ENCODE measurements at regions of chr7 and their contacts with region 1.

Region 1: DNA sequence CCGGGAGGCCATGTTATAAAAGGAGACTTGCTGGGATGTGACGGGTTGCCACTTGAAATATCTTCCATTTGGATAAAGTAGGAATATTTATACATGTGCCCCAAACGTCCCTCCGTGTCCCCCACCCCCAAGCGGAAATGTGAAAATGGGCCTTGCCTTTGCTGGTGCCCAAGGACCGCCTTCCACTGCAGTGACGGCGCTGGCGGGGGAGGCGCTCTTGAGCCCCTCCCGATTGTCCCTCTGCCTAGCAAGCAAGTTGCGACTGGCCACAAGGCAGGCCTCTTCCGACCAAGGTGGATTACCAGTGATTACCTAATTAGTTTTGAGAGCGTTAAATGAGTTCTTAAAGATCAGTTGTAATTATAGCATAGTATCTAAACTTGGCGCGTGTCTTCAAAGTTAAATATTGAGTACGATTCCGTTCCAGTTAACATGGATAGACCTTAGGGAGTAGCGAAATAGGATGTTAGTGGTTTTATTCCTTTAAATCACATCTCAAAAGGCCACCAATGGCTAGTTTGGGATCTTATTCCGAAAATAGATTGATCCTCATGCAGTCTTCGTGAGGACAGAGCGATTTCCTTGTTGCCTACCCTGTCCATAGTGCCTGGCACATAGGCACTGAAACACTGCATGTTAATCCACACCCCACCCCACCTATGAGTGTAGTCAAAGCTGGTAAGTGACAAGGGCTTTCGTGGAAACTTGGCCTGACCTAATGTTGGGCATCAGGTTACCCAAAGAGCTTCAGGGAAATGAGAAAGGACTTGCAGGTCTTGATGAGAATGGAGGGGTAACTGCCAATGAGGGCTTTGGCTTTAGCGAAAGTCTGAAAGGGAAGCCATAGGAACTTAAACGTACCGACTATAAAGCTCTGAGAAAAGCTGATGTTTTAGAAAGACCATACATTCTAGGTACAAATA is 1.1 kb downstream of the PPIA start:
- DNase-seq: no peak
- ATAC-seq: peak; percentile 77
- H3K4me3 ChIP-seq: peak overlapping the region; percentile 96
- H3K27ac ChIP-seq: peak overlapping the region; percentile 99
- H3K4me1 ChIP-seq: peaks cover 3% of the 10 kb centered on the region
- H3K27me3 ChIP-seq: no peaks in the 10 kb centered on the region
- CTCF ChIP-seq: peak; percentile 57 to 61 (median 61)
- EP300 ChIP-seq: no peak
- POLR2A ChIP-seq: no peak
- RAD21 ChIP-seq: peak; percentile 24; the same call in 1 of the 2 replicates

Region 2: DNA sequence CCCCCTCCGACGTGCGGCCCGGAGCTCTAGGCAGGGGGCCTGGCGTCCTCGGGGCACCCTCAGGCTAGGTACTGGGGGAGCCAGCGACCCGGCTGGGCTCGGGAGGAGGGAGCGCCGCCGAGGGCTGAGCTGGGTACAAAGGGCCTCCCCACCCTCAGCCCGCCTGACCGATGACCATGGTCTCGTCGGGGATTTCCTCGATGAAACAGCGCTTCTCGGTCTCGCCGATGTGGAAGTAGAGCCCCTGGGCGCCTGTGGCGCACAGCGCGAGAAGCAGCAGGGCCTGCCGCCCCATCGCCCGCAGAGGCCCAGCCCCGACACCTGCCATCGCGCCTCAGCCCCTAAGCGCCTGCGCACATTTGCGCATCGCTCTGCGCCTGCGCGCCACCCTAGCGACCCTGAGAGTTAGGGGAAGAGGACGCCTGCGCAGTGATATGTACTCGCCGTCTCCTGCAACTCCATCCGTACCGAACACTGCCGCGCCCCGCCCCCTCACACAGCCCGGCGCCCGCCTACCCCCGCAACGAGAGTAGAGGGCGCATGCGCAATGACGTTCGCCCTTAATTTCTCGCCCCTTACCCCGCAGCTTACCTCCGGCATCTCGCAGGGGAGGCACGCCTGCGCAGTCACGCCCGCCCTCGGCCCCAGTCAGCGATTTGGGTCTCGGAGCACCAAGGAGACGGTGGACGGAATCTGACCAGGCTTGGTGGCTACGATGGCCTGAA is 215.5 kb before region 1 on chr7 and contains the start of gene TMED4:
- CTCF ChIA-PET with region 1: interaction called, 3 read pairs
- POLR2A ChIA-PET with region 1: interaction called, 7 read pairs
- RAD21 ChIA-PET with region 1: interaction called, 4 read pairs
- SMC1A ChIA-PET with region 1: interaction called, 3 read pairs
- in situ Hi-C with region 1: no loop called
- intact Hi-C with region 1: loop called (anchors 5 kb)
- DNase-seq: peak; percentile 97
- ATAC-seq: peak; percentile 92
- H3K4me3 ChIP-seq: peak within 1 kb of the TSS; percentile 83
- H3K27ac ChIP-seq: peak within 1 kb of the TSS; percentile 86
- H3K4me1 ChIP-seq: peaks cover 4% of the 10 kb centered on the region; the same call in 1 of the 2 replicates
- H3K27me3 ChIP-seq: no peaks in the 10 kb centered on the region
- CTCF ChIP-seq: no peak
- EP300 ChIP-seq: no peak
- POLR2A ChIP-seq: peak; percentile 98
- RAD21 ChIP-seq: no peak
- polyA plus RNA-seq, gene TMED4: 20.8 to 21.0 TPM

Region 3: DNA sequence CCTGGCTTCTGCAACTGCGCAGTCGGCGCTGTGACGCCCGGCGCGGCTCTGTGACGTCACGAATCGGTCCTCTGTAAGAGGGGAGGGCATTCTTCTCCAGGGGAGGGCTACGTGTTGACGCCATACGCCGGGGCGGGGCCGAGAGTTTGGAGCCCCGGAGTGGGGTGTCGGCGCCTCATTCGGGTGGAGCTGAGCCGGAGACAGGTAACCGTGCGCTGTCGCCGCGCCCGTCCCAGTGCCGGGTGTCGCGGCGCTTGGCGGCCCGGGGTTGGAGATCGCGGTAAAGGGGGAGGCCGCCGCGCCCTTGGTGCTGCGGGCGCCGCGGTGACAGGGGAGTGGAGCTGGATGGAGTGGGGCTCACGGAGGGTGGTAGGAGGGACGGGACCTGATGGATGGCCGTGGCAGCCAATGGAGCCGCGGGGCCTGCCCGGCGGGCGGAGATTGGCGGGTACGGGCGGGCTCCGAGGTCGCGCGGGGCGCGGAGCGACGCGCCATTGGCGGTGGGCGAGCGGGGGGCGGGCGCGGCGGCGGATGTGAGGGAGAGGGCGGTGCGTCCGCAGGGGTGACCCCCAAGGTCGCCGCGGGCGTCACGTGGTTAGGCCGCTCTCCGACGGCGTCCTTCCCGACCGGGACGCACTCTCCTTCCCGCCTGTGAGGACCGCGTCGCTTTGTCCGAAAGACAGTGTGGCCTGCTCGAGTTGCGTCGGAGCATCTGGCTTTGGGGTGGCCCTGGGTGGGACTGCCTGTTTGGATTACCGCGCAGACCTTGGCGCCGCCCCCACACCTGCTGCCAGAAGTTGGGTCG is 190.9 kb before region 1 on chr7 and contains the start of gene OGDH:
- CTCF ChIA-PET with region 1: no interaction called
- POLR2A ChIA-PET with region 1: interaction called, 5 read pairs
- RAD21 ChIA-PET with region 1: interaction called, 6 read pairs
- SMC1A ChIA-PET with region 1: interaction called, 9 read pairs
- in situ Hi-C with region 1: no loop called
- intact Hi-C with region 1: loop called (anchors 5 kb)
- DNase-seq: peak; percentile 87
- ATAC-seq: peak; percentile 98
- H3K4me3 ChIP-seq: peak within 1 kb of the TSS; percentile 91
- H3K27ac ChIP-seq: peak within 1 kb of the TSS; percentile 93
- H3K4me1 ChIP-seq: peaks cover 19% of the 10 kb centered on the region
- H3K27me3 ChIP-seq: no peaks in the 10 kb centered on the region
- CTCF ChIP-seq: no peak
- EP300 ChIP-seq: peak in 1 of 2 experiments; percentile 12; a peak in 1 of 4 replicates
- POLR2A ChIP-seq: peak; percentile 95
- RAD21 ChIP-seq: no peak
- polyA plus RNA-seq, gene OGDH: 4.1 to 4.2 TPM

Region 4: GRCh38 chr7:44665531-44666213 is 131.9 kb before region 1 on chr7:
- CTCF ChIA-PET with region 1: no interaction called
- POLR2A ChIA-PET with region 1: no interaction called
- RAD21 ChIA-PET with region 1: no interaction called
- SMC1A ChIA-PET with region 1: no interaction called
- in situ Hi-C with region 1: no loop called
- intact Hi-C with region 1: no loop called
- DNase-seq: no peak
- ATAC-seq: no peak
- H3K4me3 ChIP-seq: no peak overlapping the region
- H3K27ac ChIP-seq: no peak overlapping the region
- H3K4me1 ChIP-seq: peaks cover 3% of the 10 kb centered on the region; the same call in 1 of the 2 replicates
- H3K27me3 ChIP-seq: no peaks in the 10 kb centered on the region
- CTCF ChIP-seq: no peak
- EP300 ChIP-seq: no peak
- POLR2A ChIP-seq: no peak
- RAD21 ChIP-seq: no peak

Region 5: GRCh38 chr7:44787041-44787440 is 10.5 kb before region 1 on chr7:
- CTCF ChIA-PET with region 1: interaction called, 10 read pairs
- POLR2A ChIA-PET with region 1: interaction called, 11 read pairs
- RAD21 ChIA-PET with region 1: no interaction called
- SMC1A ChIA-PET with region 1: interaction called, 3 read pairs
- in situ Hi-C with region 1: no loop called
- intact Hi-C with region 1: no loop called
- DNase-seq: no peak
- ATAC-seq: peak; percentile 84
- H3K4me3 ChIP-seq: no peak overlapping the region
- H3K27ac ChIP-seq: no peak overlapping the region
- H3K4me1 ChIP-seq: peaks cover 4% of the 10 kb centered on the region
- H3K27me3 ChIP-seq: no peaks in the 10 kb centered on the region
- CTCF ChIP-seq: no peak
- EP300 ChIP-seq: no peak
- POLR2A ChIP-seq: no peak
- RAD21 ChIP-seq: no peak

Region 6: GRCh38 chr7:44811086-44811485 is 13.5 kb after region 1 on chr7:
- CTCF ChIA-PET with region 1: no interaction called
- POLR2A ChIA-PET with region 1: interaction called, 7 read pairs
- RAD21 ChIA-PET with region 1: no interaction called
- SMC1A ChIA-PET with region 1: interaction called, 12 read pairs
- in situ Hi-C with region 1: no loop called
- intact Hi-C with region 1: no loop called
- DNase-seq: no peak
- ATAC-seq: peak; percentile 60
- H3K4me3 ChIP-seq: no peak overlapping the region
- H3K27ac ChIP-seq: no peak overlapping the region
- H3K4me1 ChIP-seq: peaks cover 4% of the 10 kb centered on the region; the same call in 1 of the 2 replicates
- H3K27me3 ChIP-seq: no peaks in the 10 kb centered on the region
- CTCF ChIP-seq: no peak
- EP300 ChIP-seq: no peak
- POLR2A ChIP-seq: no peak
- RAD21 ChIP-seq: no peak

Measured in GM12878 (cell line).